ENCODE measurements at regions of chr12 and their contacts with region 1.

Region 1: DNA sequence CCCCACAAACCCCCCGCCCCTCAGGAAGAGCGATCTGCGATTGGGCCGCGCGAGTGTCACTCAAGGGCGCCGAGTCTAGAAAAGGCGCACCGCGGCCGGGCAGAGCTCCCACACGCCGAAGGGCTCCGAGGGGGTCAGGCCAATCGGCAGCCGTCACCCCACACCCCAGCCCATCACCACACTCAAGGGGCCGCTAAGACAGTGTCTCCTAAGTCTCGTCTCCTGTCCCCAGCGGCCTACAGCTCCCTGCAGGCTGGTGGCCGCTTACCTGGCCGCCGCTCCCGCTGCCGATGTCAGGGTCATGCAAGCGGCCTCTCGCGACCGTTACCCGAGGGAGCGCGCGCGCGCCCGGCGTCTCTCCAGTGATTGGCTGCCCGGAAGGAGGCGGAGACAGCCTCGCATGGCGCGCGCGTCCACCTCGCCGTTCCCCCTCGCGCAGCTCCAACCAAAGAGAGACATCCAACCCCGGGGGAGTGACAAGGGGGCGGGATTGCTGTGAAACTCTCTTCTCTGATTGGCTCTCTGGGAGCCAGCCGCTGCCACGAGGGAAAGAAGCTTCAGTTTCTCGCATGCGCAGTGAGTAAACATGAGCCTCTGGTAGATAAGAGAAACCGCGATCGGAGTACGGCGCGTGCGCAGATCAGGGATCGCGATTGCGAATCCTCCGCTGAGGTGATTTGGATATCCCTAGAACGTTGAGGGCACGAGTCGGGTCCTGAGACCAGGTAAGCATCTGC is at the starts of genes MPHOSPH9 and MTRFR:
- DNase-seq: peak; percentile 98 to 100
- H3K4me3 ChIP-seq: peak within 1 kb of the TSS; percentile 81 to 95
- H3K27ac ChIP-seq: peak within 1 kb of the TSS; percentile 86 to 93
- H3K4me1 ChIP-seq: peaks cover 5 to 19% of the 10 kb centered on the region in 2 donors
- H3K27me3 ChIP-seq: no peaks in the 10 kb centered on the region
- CTCF ChIP-seq: no peak
- total RNA-seq, gene MPHOSPH9: 21.6 TPM
- total RNA-seq, gene MTRFR: 0.85 TPM

Region 2: DNA sequence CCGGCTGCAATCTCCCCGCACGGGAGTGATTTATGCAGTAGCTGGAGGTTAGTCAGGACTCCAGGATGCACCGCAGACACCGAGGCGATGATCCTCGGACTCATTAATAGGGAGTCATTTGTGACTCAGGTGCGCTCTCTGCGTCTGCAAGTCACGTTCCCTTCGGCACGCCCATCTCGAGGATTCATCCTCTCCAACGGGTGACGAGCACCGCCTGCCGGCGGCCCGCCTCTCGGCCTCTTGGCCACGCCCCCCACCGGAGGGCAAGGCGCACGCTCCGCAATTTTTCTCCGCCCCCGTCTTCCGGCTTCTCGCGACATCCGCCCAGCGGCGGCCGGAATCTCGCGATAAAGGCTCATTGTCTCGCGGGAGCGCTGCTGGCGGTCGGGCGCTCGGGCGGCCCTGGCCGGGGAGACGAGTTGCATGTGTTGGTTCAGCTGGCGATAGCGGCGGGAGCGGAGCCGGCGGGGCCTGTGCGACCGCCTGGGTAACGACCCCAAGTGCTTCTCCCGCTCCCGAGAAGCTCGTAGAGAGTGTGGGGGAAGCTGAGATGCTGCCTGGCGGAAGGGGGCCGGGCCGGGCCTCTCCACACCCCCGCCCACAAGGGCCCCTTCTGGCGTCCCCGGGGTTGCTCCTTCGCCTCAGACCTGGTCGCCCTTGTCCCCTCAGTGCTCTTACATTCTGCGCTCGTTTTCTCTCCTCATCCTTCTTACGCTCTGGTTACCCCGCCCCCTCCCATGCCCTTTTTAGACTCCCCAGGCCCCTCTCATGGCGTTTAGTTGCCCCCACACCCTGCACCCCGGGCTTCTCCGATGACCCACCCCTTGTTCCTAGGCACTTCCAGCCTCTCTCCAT is 480.3 kb before region 1 on chr12 and contains the start of gene DENR:
- intact Hi-C with region 1: loop called (anchors 5 kb)
- DNase-seq: peak; percentile 90 to 99
- H3K4me3 ChIP-seq: peak within 1 kb of the TSS; percentile 77 to 80
- H3K27ac ChIP-seq: peak within 1 kb of the TSS; percentile 70 to 75
- H3K4me1 ChIP-seq: peaks cover 3 to 12% of the 10 kb centered on the region in 2 donors
- H3K27me3 ChIP-seq: no peaks in the 10 kb centered on the region
- CTCF ChIP-seq: peak; percentile 63 to 86 (median 72)
- total RNA-seq, gene DENR: 12.2 TPM

Region 3: GRCh38 chr12:122984612-122985337 is 248.2 kb before region 1 on chr12:
- intact Hi-C with region 1: loop called (anchors 2 kb)
- DNase-seq: no peak
- H3K4me3 ChIP-seq: peak overlapping the region; percentile 35 to 37
- H3K27ac ChIP-seq: peak overlapping the region; percentile 93 to 95
- H3K4me1 ChIP-seq: peaks cover 27 to 47% of the 10 kb centered on the region in 2 donors
- H3K27me3 ChIP-seq: no peaks in the 10 kb centered on the region
- CTCF ChIP-seq: no peak

Region 4: DNA sequence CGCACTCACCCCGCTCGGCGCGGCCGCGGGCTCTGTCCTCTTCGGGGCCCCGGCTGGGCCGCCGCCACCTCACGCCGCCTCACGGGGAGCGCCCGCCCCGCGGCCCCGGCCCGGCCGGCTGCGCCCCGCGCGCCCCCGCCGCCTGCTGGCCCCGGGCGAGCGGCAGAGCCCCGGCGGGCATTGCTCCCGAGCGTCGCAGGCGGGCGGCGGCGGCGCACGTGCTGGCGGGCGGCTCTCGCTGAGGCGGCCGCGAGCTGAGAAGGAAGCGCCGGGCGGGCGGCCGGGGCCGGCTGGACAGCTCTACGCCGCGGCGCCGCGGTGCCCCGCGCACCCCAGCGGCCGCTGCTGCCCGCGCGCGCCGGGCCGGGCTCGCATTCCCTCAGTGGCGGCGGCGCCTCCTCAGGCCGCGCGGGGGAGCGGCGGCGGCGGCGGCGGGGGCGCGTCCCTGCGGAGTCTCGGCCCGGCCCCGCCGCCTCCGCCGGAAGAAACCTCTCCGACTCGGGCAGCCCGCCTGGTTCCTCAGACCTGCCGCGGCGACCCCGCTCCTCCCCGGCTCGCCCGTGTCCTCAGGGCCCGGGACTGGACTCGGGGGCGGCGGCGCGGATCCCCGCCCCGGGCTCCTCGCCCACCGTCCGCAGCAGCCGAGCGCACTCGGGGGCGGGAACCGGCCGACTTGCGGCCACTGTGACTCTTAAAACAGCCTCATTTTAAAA is 82.1 kb before region 1 on chr12 and contains the start of gene PITPNM2:
- intact Hi-C with region 1: loop called (anchors 2 kb)
- DNase-seq: peak in 1 of 2 donors; percentile 79
- H3K4me3 ChIP-seq: peak within 1 kb of the TSS; percentile 82 to 90
- H3K27ac ChIP-seq: peak within 1 kb of the TSS; percentile 86 to 88
- H3K4me1 ChIP-seq: peaks cover 2 to 18% of the 10 kb centered on the region in 2 donors
- H3K27me3 ChIP-seq: no peaks in the 10 kb centered on the region
- CTCF ChIP-seq: peak in 1 of 3 experiments; percentile 56
- total RNA-seq, gene PITPNM2: 8.4 TPM

Region 5: GRCh38 chr12:123633379-123634141 is 400.6 kb after region 1 on chr12 and contains the starts of genes EIF2B1 and GTF2H3:
- intact Hi-C with region 1: loop called (anchors 1 kb)
- DNase-seq: peak; percentile 85 to 98
- H3K4me3 ChIP-seq: peak within 1 kb of the TSS; percentile 60 to 80
- H3K27ac ChIP-seq: peak within 1 kb of the TSS; percentile 76 to 87
- H3K4me1 ChIP-seq: peaks cover 6 to 9% of the 10 kb centered on the region in 2 donors
- H3K27me3 ChIP-seq: no peaks in the 10 kb centered on the region
- CTCF ChIP-seq: no peak
- total RNA-seq, gene EIF2B1: 72.2 TPM
- total RNA-seq, gene GTF2H3: 12.0 TPM

Measured in ascending aorta (tissue), 2 donors.